HepG2 (cell line): ENCODE measurements at regions of chr13 and their contacts with region 1.

Region 1: DNA sequence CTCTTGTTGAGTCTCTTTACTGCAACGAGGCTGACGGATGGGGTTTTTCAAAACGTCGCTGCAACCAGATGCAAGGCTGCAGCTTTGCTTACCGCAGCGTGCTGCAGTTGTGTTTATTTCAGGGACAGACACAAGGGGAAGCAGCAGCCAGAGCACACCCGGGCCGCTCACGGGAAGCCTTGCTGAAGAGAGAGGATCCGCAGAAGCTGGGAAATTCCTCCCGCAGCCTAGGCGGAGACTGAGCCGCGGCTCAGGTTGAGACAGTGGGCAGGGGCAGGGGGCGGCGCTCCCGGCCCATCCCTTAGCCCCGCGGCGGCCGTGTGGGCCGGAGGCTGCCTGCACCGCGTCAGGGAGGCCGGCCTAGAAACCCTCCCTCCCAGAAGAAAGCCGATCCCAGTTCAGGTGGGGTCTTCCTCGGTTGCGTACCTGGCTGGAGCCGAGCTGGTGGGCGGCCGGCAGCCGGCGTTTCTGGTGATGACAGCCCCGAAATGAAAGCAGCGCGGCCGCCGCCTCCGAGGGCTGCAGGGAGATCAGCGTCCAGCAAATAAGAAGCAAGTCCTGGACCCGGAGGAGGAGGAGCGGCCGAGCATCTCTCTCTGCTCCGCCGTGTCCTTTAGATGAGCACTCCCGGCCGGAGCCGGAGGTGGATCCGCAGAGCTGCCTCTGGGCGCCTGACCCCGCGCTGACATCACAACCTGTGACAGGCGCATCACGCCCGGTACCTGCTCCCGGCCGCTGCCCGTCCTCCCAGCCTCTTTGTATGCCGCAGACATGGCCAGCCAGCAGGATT is at the start of gene FRY:
- DNase-seq: peak; percentile 74
- ATAC-seq: peak; percentile 94
- H3K4me3 ChIP-seq: peak within 1 kb of the TSS; percentile 65 to 88 (median 83)
- H3K27ac ChIP-seq: peak within 1 kb of the TSS; percentile 80
- H3K4me1 ChIP-seq: peaks cover 65% of the 10 kb centered on the region
- H3K27me3 ChIP-seq: no peaks in the 10 kb centered on the region; a peak in 1 of 5 replicates
- CTCF ChIP-seq: peak; percentile 60
- EP300 ChIP-seq: peak in 1 of 2 experiments; percentile 10; a peak in 1 of 4 replicates
- POLR2A ChIP-seq: peak; percentile 15 to 47; a peak in 2 of 4 replicates
- RAD21 ChIP-seq: peak; percentile 30; the same call in 1 of the 2 replicates
- total RNA-seq, gene FRY: 8.2 and 14.8 TPM in 2 replicates

Region 2: DNA sequence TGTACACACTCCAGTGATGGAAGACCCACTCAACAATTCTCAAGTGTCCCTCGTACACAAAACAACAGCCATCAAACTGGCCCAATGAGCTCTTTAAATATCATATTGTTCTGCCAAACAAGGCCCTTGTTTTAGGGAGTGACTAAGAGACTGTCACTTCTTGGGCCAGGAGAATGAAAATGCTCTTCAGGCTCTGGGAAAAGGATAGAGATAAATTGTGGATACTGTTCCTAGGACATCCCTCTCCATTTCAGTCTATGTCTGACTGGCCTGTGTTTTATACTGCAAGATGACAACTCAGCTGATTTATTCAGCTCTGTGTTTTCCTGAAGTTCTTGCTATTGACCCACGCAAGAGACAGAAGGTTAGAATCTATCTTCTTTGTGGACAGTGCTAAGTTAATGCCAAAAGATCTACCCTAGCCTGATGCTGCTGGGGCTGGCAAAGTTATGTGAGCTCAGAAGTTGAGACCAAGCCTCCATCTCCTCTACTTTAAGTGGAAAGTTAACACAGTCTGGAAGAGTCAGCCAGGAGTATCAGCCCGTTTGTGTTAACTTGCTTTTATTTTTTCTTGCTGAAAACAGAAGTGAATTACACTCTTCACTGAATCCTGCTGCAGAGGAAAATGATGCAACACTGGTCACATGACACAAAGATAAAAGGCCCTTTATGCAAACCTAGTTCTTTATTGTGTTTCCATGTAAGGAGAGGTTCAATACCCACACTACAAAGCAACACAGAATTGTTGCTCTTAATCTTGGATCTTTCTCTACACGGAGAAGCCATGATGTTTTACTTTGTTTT is 15.0 kb after region 1 on chr13:
- CTCF ChIA-PET with region 1: no interaction called
- POLR2A ChIA-PET with region 1: interaction called, 15 read pairs
- in situ Hi-C with region 1: no loop called
- intact Hi-C with region 1: no loop called
- DNase-seq: peak; percentile 92
- ATAC-seq: peak; percentile 88
- H3K4me3 ChIP-seq: peak overlapping the region in 1 of 3 experiments; percentile 24; a peak in 2 of 6 replicates
- H3K27ac ChIP-seq: peak overlapping the region; percentile 79
- H3K4me1 ChIP-seq: peaks cover 53% of the 10 kb centered on the region
- H3K27me3 ChIP-seq: no peaks in the 10 kb centered on the region
- CTCF ChIP-seq: no peak
- EP300 ChIP-seq: peak in 1 of 2 experiments; percentile 56; a peak in 2 of 4 replicates
- POLR2A ChIP-seq: no peak
- RAD21 ChIP-seq: no peak

Region 3: DNA sequence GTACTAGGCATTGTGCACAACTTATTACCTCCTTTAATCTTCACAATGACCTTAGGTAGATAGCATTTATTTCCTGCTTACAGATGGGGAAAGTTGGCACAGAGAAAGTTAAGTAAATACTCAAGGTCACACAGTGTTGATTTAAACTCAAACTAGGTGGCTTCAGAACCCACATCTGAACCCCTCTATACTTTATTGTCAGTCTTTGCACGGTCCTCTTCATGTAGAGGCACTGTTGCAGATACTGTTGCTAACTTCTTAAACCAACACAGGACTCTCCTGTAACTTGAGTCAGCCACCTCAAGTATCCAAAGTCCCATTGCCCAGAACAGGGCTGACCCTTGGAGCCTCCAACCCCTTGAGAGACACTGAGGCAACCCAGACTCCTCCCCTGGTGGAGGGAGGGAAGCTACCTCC is 49.1 kb after region 1 on chr13:
- CTCF ChIA-PET with region 1: no interaction called
- POLR2A ChIA-PET with region 1: interaction called, 4 read pairs
- in situ Hi-C with region 1: no loop called
- intact Hi-C with region 1: loop called (anchors 1 kb)
- DNase-seq: peak; percentile 90
- ATAC-seq: peak; percentile 91
- H3K4me3 ChIP-seq: no peak overlapping the region
- H3K27ac ChIP-seq: peak overlapping the region; percentile 66
- H3K4me1 ChIP-seq: peaks cover 88% of the 10 kb centered on the region
- H3K27me3 ChIP-seq: no peaks in the 10 kb centered on the region
- CTCF ChIP-seq: no peak
- EP300 ChIP-seq: peak in 1 of 2 experiments; percentile 91; a peak in 2 of 4 replicates
- POLR2A ChIP-seq: no peak
- RAD21 ChIP-seq: no peak

Region 4: DNA sequence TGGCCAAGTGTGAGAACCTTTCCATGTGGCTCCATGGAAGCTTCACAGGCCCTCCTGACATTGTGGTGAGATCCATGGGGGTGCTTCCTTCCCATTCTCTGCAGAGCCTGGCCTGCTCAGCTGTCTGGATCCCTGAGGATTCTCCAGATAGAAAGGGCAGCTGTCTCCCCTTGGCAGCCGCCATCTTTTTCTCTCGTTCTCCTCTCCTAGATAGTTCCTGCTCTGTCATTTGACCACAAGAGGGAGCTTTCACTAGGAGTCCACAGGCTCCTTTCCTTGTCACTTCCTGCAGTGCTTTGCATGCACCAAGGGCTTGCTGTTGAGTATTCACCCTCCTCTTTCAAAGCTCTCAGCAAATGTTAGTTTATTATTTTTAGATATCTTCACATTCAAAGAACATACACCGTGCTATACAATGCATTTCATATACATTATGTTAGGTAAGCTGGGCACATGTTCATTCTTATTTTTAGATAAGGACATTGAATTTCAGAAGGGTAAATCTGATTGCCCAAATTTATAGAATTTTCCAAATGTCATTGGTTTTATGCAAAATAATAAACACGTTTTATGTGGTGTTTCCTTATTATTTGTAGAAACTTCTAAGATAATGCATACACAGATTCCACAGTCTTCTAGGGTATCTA is 133.5 kb after region 1 on chr13:
- CTCF ChIA-PET with region 1: no interaction called
- POLR2A ChIA-PET with region 1: interaction called, 5 read pairs
- in situ Hi-C with region 1: no loop called
- intact Hi-C with region 1: loop called (anchors 5 kb)
- DNase-seq: peak; percentile 69
- ATAC-seq: peak; percentile 91
- H3K4me3 ChIP-seq: no peak overlapping the region
- H3K27ac ChIP-seq: no peak overlapping the region
- H3K4me1 ChIP-seq: peaks cover 37% of the 10 kb centered on the region
- H3K27me3 ChIP-seq: no peaks in the 10 kb centered on the region
- CTCF ChIP-seq: peak; percentile 75
- EP300 ChIP-seq: no peak
- POLR2A ChIP-seq: no peak
- RAD21 ChIP-seq: peak; percentile 39; the same call in 1 of the 2 replicates

Region 5: GRCh38 chr13:32427852-32428580 is 396.8 kb after region 1 on chr13 and contains the start of gene N4BP2L1:
- CTCF ChIA-PET with region 1: no interaction called
- POLR2A ChIA-PET with region 1: no interaction called
- in situ Hi-C with region 1: loop called (anchors 25 kb)
- intact Hi-C with region 1: no loop called
- DNase-seq: peak; percentile 96
- ATAC-seq: peak; percentile 94
- H3K4me3 ChIP-seq: peak within 1 kb of the TSS; percentile 76 to 90 (median 85)
- H3K27ac ChIP-seq: peak within 1 kb of the TSS; percentile 94
- H3K4me1 ChIP-seq: peaks cover 64% of the 10 kb centered on the region
- H3K27me3 ChIP-seq: no peaks in the 10 kb centered on the region; a peak in 1 of 5 replicates
- CTCF ChIP-seq: peak; percentile 27
- EP300 ChIP-seq: 0 out of 4 replicates have a peak, but pooled peaks of 1 of the 2 experiments have one; percentile 16
- POLR2A ChIP-seq: peak; percentile 69 to 74
- RAD21 ChIP-seq: no peak
- total RNA-seq, gene N4BP2L1: 11.8 and 13.2 TPM in 2 replicates